ENCODE measurements at regions of chr17 and their contacts with region 1.

Region 1: DNA sequence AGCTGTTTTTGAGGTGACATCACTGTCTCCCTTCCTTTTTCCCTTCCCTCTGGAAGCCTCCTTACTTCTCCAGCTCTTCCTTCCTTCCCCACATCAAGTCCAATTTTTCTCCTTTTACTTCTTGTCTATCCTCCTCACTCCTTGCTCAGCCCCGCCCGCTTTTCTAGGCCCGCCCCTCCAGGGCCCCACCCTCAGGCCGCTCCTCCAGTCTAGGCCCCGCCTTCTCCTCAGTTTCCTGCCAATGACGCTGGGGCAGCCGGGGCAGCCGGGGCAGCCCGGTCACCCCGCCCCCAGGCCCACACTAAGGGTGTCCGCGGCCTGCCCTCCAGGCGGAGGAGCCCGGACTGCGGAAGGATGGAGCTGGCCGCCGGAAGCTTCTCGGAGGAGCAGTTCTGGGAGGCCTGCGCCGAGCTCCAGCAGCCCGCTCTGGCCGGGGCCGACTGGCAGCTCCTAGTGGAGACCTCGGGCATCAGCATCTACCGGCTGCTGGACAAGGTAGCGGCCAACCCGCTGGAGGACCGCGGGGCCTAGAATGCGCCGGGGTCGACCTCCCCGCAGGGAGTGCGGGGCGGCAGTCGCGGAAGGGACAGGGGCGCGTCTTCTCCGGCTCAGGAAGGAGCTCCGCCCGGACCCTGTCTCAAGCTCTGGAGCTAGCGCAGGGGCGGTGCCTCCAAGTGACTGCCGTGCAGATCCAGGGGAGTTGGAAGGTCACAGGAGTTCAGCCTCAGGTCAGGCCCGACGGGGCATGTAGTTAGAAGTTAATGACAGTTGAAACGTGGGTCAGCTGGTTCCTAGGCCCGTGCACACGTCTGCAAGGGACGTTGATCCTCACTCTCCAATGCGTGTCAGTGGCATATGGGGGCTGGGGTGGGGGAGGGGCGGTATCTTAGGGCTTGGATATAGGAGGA is at the start of gene PCTP:
- DNase-seq: peak; percentile 78 to 96
- H3K4me3 ChIP-seq: peak within 1 kb of the TSS; percentile 75 to 85 (median 78)
- H3K27ac ChIP-seq: no peak within 1 kb of the TSS
- H3K4me1 ChIP-seq: peaks cover 2 to 7% (median 3%) of the 10 kb centered on the region in 4 experiments; a peak in 2 of 7 replicates
- H3K27me3 ChIP-seq: no peaks in the 10 kb centered on the region
- CTCF ChIP-seq: peak; percentile 36 to 44 (median 42)
- EP300 ChIP-seq: peak in 1 of 2 experiments; percentile 63; a peak in 1 of 3 replicates
- POLR2A ChIP-seq: peak; percentile 76 to 79
- RAD21 ChIP-seq: peak; percentile 28 to 34; a peak in 2 of 4 replicates
- total RNA-seq, gene PCTP: 12.5 and 14.6 TPM in 2 replicates

Region 2: DNA sequence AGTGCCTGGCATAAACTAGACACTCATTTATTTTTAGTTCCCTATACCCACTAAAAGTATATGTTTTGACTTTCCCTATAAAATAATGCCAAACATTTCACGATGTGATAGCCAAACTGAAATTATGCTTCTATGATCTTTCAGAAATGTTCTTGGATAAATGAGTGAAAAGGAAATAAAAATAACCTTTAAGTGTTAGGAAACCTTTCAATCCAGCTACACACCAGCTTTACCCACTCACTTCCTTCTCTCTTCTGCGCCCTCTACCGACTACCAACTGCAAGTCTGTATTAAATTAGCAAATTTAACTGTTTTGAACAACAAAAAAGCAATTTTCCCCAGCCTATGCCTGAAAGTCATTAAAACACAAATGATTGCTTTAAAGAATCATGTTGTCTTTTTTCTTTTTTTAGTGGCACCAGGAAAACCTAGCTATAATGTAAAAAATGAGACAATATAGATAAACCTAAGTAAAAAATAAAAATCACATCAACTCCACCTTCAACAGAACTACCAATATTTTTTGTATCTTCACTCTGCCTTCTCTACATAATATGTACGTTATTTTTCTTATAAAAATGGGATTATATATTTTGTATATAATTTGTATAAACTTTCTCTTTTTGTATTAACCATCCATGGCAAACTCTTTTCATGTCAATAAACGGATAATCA is 15.1 kb before region 1 on chr17:
- CTCF ChIA-PET with region 1: interaction called, 13 read pairs
- POLR2A ChIA-PET with region 1: no interaction called
- DNase-seq: no peak
- H3K4me3 ChIP-seq: no peak overlapping the region
- H3K27ac ChIP-seq: no peak overlapping the region
- H3K4me1 ChIP-seq: peaks cover 1 to 16% (median 15%) of the 10 kb centered on the region in 4 experiments; a peak in 4 of 7 replicates
- H3K27me3 ChIP-seq: no peaks in the 10 kb centered on the region
- CTCF ChIP-seq: peak in 2 of 3 experiments; percentile 64 to 72; a peak in 3 of 4 replicates
- EP300 ChIP-seq: no peak
- POLR2A ChIP-seq: no peak
- RAD21 ChIP-seq: peak; percentile 46 to 57